ENCODE measurements at regions of chr2 and their contacts with region 1.

Region 1: GRCh38 chr2:68344031-68344430 is 21.1 kb upstream of the PLEK start:
- DNase-seq: no peak
- H3K4me3 ChIP-seq: no peak overlapping the region
- H3K27ac ChIP-seq: no peak overlapping the region
- H3K27me3 ChIP-seq: no peaks in the 10 kb centered on the region
- CTCF ChIP-seq: no peak

Region 2: GRCh38 chr2:68357605-68358337 is 13.7 kb after region 1 on chr2:
- CTCF ChIA-PET with region 1: interaction called, 13 read pairs
- POLR2A ChIA-PET with region 1: no interaction called
- DNase-seq: peak; percentile 18
- H3K4me3 ChIP-seq: no peak overlapping the region
- H3K27ac ChIP-seq: no peak overlapping the region
- H3K27me3 ChIP-seq: no peaks in the 10 kb centered on the region
- CTCF ChIP-seq: peak; percentile 75